ENCODE measurements at regions of chr7 and their contacts with region 1.

Region 1: DNA sequence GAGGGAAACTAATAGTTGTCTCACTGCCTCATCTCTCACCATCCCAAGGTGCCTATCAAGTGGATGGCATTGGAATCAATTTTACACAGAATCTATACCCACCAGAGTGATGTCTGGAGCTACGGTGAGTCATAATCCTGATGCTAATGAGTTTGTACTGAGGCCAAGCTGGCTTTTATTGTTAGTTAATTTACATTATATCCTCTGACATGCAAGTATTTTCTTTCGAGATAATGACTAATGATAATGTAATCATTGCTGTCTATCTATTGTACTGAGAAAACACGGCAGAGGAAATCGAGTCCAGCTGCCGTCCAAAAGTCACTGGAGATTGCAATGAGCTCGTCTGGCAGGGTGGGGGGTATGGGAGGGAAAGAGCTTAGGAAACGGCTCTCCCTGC is 172.4 kb upstream of the LANCL2 start:
- DNase-seq: no peak
- ATAC-seq: no peak

Region 2: DNA sequence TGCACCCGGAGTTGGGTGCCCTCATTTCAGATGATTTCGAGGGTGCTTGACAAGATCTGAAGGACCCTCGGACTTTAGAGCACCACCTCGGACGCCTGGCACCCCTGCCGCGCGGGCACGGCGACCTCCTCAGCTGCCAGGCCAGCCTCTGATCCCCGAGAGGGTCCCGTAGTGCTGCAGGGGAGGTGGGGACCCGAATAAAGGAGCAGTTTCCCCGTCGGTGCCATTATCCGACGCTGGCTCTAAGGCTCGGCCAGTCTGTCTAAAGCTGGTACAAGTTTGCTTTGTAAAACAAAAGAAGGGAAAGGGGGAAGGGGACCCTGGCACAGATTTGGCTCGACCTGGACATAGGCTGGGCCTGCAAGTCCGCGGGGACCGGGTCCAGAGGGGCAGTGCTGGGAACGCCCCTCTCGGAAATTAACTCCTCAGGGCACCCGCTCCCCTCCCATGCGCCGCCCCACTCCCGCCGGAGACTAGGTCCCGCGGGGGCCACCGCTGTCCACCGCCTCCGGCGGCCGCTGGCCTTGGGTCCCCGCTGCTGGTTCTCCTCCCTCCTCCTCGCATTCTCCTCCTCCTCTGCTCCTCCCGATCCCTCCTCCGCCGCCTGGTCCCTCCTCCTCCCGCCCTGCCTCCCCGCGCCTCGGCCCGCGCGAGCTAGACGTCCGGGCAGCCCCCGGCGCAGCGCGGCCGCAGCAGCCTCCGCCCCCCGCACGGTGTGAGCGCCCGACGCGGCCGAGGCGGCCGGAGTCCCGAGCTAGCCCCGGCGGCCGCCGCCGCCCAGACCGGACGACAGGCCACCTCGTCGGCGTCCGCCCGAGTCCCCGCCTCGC is 174.1 kb before region 1 on chr7 and contains the start of gene EGFR:
- intact Hi-C with region 1: loop called in 1 of 2 experiments (anchors 10 kb)
- DNase-seq: peak; percentile 83
- ATAC-seq: peak; percentile 83 to 89
- total RNA-seq, gene EGFR: 23.3 to 26.6 TPM

Region 3: DNA sequence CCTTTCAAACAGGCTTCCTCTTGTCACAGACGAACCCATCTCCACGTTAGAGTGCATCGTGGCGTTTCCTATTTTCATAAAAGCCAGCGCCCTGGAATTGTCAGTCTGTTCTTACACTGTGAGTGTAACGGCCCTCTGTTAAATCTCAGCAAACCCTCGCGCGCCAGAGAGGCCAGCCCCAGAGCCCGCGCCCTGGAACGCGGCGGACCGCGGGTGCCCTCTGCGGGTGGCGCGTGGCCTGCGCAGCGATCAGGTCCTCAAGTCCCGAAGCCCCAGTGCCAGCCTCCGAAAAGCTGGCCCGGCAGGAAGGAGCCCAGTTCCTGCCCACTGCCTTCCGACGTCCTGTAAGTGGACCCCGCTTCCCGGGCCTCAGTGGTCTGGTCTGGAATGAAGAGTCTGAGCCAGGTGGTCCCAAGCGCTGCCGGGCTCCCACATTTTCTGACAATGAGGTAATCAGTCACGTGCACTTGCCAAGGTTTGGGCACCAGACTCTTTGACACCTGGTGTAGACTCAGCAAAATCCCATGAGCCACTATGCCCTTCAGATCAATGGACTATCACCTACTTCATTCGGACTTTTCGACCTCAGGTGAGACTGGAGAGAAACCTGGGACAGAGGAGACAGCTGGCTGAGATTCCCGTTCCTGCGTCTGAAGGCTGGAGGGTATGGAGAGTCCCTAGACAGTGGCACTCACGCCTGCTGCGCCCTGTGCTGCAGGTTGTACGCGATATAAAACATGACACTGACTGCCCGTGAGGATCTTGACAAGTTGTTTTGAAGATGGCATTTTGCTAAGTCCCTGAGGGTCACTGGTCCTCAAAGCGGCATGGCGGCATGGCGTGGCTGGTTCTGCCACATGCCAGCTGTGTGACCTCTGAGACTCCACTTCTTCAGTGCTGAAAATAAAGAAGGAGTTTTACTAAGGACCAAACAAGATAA is 63.0 kb after region 1 on chr7:
- intact Hi-C with region 1: no loop called
- DNase-seq: peak; percentile 86
- ATAC-seq: peak; percentile 93 to 96